Gastrocnemius medialis (tissue), 4 donors: ENCODE measurements at regions of chr3 and their contacts with region 1.

Region 1: DNA sequence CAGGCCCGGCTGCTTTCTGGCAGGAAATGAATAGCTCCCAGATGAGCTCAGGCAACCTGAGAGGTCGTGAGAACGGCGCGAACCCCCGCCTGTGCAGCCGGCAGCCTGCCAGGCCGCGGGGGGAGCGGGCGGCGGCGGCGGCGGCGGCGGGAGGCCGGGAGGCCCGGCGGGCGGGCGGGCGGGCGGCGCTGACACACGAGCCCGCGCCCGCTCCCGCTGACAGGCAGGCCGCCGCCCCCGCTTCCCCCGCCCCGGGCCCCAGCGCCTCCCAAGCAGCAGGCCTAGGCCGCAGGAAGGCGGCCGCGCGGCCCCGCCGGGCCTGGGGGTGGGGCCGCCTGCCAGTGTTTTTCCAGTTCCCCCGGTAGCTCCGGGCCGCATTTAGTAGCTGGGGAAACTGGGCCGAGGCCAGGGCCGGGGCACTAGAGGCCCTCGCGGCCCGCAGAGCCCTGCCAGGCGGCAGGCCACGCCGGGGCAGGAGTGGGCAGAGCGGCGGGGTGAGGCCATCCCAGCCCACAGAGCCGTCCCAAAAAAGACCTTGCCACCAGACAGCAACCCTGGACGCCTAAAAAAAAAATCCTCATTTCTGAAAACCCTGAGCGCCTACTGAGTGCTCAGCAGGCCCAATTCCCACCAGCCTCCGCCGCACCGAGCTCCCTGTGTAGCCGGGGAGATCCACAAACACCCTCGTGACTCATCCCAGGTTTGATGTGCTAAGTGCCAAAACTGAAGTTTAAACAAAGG is 5.6 kb downstream of the HES1 start:
- DNase-seq: peak; percentile 84 to 94
- ATAC-seq: peak; percentile 57 to 61
- H3K4me3 ChIP-seq: peak overlapping the region; percentile 38 to 59 (median 50)
- H3K27ac ChIP-seq: peak overlapping the region; percentile 94 to 100 (median 98)
- H3K4me1 ChIP-seq: peaks cover 36 to 50% of the 10 kb centered on the region in 2 donors
- H3K27me3 ChIP-seq: no peaks in the 10 kb centered on the region
- CTCF ChIP-seq: peak in 1 of 5 experiments; percentile 18
- POLR2A ChIP-seq: peak; percentile 43 to 70

Region 2: GRCh38 chr3:194265483-194265892 is 123.9 kb after region 1 on chr3:
- in situ Hi-C with region 1: loop called in 2 of 4 experiments (anchors 10 kb)
- intact Hi-C with region 1: loop called (anchors 2 kb)
- DNase-seq: peak; percentile 93 to 96
- ATAC-seq: peak; percentile 96 to 97
- H3K4me3 ChIP-seq: no peak overlapping the region
- H3K27ac ChIP-seq: peak overlapping the region; percentile 61 to 71 (median 68)
- H3K4me1 ChIP-seq: peaks cover 23 to 36% of the 10 kb centered on the region in 2 donors
- H3K27me3 ChIP-seq: no peaks in the 10 kb centered on the region
- CTCF ChIP-seq: no peak
- POLR2A ChIP-seq: no peak

Region 3: DNA sequence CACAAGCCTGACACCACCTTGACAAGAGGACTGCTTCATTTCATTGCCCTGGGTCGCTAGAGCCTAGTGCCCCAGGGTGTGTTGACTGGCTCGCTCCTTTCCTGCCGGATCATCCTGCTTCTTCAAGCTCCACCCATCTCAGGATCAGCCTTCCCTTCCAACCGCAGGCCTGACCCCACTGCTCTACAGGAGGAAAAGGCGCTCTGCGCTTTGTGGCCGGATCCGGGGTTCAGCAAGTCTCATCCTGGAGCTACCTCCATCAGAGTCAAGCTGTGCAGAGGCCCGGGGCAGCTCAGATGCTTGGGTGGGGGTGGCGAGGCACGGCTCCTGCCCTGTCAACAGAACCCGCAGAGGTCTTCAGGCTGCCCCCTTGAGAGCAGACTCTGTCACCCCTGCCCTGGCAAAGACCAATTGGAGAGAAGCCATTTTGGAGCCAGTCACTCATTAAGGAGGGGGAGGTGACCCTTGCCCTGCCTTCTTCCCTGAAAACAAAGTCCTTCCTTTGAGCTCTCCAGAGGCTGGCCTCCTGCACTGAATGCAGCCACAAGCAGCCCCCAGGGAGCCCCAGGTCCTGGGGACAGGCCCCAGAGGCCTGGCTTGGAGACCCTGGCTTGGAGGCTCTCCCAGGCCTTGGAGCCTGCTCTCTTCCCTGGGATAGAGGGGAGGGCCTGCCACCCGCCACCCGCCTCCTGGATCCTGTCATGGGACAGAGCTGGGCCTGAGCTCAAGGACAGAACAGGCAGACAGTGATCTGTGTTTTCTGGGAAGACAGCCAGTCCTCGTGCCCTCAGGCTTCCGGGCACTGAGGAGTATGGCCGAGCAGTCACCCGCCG is 129.3 kb after region 1 on chr3:
- in situ Hi-C with region 1: loop called in 2 of 4 experiments (anchors 10 kb)
- intact Hi-C with region 1: loop called (anchors 1 kb)
- DNase-seq: peak; percentile 95 to 96
- ATAC-seq: peak; percentile 88 to 89
- H3K4me3 ChIP-seq: no peak overlapping the region
- H3K27ac ChIP-seq: peak overlapping the region; percentile 84 to 94 (median 91)
- H3K4me1 ChIP-seq: peaks cover 28 to 48% of the 10 kb centered on the region in 2 donors
- H3K27me3 ChIP-seq: no peaks in the 10 kb centered on the region
- CTCF ChIP-seq: peak in 1 of 5 experiments; percentile 11
- POLR2A ChIP-seq: peak; percentile 25 to 35